GM12878 (cell line): ENCODE measurements at regions of chr5 and their contacts with region 1.

Region 1: DNA sequence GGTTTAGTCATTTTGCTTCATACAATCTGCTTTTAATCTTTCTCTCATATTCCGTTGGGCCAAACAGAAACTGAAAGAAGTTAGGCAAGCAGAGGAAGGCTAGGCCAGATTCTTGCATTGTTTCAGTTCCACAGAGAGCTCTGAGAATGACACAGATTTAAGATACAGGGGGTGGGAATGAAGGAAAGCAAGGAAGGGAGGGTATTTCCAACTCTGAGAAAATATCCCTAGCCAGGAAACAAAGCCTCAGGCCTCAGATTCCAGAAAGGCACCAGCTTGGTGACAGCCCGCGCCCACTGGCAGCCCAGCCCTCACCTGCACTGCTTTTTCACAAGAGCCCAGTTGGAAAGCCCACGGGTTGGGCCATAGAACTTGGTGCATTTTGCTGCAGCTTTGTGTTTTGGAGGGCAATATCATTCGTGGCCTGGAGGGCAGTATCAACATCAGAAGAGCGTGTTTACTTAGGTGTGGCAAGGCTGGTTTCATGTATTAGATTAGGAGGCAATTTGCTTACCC is 63.5 kb downstream of the ENC1 start:
- DNase-seq: peak; percentile 70
- ATAC-seq: peak; percentile 74
- H3K4me3 ChIP-seq: peak overlapping the region; percentile 29
- H3K27ac ChIP-seq: peak overlapping the region; percentile 86
- H3K4me1 ChIP-seq: peaks cover 35% of the 10 kb centered on the region
- H3K27me3 ChIP-seq: no peaks in the 10 kb centered on the region
- CTCF ChIP-seq: no peak
- EP300 ChIP-seq: peak in 1 of 2 experiments; percentile 79; a peak in 2 of 4 replicates
- POLR2A ChIP-seq: no peak
- RAD21 ChIP-seq: peak; percentile 24; the same call in 1 of the 2 replicates

Region 2: GRCh38 chr5:73902327-73903051 is 674.5 kb before region 1 on chr5:
- CTCF ChIA-PET with region 1: no interaction called
- POLR2A ChIA-PET with region 1: no interaction called
- RAD21 ChIA-PET with region 1: interaction called, 4 read pairs
- SMC1A ChIA-PET with region 1: interaction called, 3 read pairs
- in situ Hi-C with region 1: no loop called
- intact Hi-C with region 1: loop called (anchors 5 kb)
- DNase-seq: peak; percentile 55
- ATAC-seq: peak; percentile 3; the same call in 1 of the 3 replicates
- H3K4me3 ChIP-seq: no peak overlapping the region
- H3K27ac ChIP-seq: no peak overlapping the region
- H3K4me1 ChIP-seq: peaks cover 12% of the 10 kb centered on the region
- H3K27me3 ChIP-seq: peaks cover 0 to 7% of the 10 kb centered on the region in 2 experiments; a peak in 1 of 4 replicates
- CTCF ChIP-seq: peak; percentile 33 to 72 (median 68); a peak in 5 of 6 replicates
- EP300 ChIP-seq: no peak
- POLR2A ChIP-seq: no peak
- RAD21 ChIP-seq: peak; percentile 86

Region 3: DNA sequence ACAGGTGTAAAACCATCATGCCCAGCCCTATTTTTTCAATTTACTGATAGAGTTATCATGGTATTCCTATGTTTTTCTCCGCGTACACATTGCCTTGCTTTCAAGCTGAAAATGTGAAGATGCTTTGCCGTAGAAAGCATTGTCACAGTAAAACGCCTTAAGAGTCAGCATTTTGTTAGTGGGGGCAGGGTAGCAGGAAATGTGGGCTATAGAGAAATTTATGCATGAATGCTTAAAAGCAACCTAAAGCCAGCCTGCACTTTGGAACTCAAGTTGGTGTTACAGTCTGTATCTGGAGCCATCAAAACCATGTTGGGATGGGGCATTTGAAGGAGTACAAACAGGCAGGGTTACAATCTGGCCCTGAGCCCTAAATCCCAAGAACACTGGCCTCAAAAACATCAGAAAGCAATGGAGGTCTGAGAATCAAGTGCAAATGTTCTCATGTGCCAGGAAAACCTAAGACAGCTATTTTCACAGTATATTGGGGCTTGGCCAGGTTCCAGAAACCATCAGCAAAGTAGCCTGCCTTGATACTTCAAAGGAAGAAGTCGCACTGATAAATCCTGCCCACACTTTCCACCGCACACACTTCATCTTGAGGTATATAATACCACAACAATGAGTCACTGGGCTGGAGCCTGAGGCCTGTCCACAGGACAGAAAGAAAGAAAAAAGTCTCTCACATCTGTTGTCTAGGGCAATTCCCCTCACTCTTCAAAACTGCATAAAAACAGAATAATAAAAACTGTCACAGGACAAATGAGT is 250.2 kb before region 1 on chr5:
- CTCF ChIA-PET with region 1: no interaction called
- POLR2A ChIA-PET with region 1: no interaction called
- RAD21 ChIA-PET with region 1: no interaction called
- SMC1A ChIA-PET with region 1: no interaction called
- in situ Hi-C with region 1: no loop called
- intact Hi-C with region 1: loop called (anchors 5 kb)
- DNase-seq: peak; percentile 92
- ATAC-seq: peak; percentile 92
- H3K4me3 ChIP-seq: no peak overlapping the region
- H3K27ac ChIP-seq: no peak overlapping the region
- H3K4me1 ChIP-seq: peaks cover 13% of the 10 kb centered on the region
- H3K27me3 ChIP-seq: no peaks in the 10 kb centered on the region
- CTCF ChIP-seq: no peak
- EP300 ChIP-seq: peak; percentile 16 to 25; a peak in 2 of 4 replicates
- POLR2A ChIP-seq: no peak
- RAD21 ChIP-seq: no peak

Region 4: DNA sequence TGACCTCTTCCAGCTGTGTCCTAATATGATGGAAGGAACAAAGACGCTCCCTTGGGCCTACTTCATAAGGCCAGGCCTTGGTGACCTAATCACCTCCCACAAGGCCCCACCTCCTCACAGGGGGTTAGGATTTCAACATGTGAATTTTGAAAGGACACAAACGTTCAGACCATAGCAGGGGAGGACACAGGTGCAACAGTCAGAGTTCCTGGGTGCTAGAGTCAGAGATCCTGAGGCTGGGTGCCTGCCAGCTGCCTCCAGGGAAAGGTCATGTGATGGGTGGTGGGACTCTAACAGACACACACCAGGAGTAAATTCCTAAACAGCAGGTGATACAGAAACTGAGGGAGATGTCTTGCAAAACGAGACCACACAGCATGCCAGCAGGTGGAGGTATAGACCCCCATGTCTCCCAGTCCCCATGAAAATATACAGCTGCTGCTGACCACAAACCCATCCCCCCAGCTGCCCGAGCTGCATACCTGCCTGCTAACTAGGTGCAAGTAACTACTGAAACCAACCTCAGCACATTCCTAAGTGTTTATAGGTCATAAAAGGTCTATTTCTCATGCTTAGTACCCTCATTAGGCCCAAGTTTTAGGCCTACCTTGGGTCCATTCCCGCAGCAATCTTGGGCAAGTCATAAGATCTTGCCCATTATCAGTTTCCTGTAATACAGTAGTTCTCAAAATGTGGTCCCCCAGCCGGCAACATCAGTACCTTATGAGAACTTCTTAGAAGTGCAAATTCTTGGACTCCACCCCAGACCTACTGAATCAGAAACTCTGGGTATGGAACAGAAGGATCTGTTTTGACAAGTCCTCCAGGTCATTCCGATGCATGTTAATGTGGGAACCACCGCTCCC is 181.8 kb before region 1 on chr5:
- CTCF ChIA-PET with region 1: no interaction called
- POLR2A ChIA-PET with region 1: no interaction called
- RAD21 ChIA-PET with region 1: no interaction called
- SMC1A ChIA-PET with region 1: interaction called, 4 read pairs
- in situ Hi-C with region 1: no loop called
- intact Hi-C with region 1: loop called (anchors 5 kb)
- DNase-seq: no peak
- ATAC-seq: peak; percentile 33
- H3K4me3 ChIP-seq: no peak overlapping the region
- H3K27ac ChIP-seq: no peak overlapping the region
- H3K4me1 ChIP-seq: peaks cover 14% of the 10 kb centered on the region
- H3K27me3 ChIP-seq: no peaks in the 10 kb centered on the region
- CTCF ChIP-seq: peak in 2 of 3 experiments; percentile 24 to 34; a peak in 3 of 6 replicates
- EP300 ChIP-seq: no peak
- POLR2A ChIP-seq: no peak
- RAD21 ChIP-seq: peak; percentile 46

Region 5: DNA sequence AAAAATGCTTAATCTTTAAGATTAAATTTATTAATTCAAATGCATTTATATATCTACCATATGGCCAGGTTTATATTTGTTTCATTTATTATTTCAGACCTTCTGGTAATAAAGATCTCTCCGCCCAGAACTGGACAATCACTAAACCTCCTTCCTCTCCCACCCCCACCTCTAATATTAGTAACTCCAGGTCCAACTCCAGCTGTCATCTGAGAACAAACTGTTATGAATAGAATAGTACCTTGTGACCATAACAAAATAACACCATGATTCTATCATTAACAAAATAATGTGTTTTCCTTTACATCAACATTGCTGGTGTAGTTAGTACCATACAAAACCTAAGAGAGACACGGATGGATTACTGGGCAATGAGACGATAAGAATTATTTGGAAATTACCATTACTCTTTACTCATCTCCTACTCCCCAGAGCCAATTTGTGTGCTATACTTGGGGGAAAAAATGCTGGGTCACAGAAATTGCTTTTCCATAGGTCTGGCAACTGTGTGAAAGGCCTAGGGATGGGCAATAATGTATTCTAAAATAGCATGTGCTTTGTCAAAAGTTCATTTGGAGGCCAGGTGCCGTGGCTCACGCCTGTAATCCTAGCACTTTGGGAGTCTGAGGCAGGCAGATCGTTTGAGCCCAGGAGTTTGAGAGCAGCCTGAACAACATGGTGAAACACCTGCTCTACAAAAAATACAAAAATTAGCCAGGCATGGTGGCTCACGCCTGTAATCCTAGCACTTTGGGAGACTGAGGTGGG is 122.6 kb before region 1 on chr5:
- CTCF ChIA-PET with region 1: no interaction called
- POLR2A ChIA-PET with region 1: no interaction called
- RAD21 ChIA-PET with region 1: no interaction called
- SMC1A ChIA-PET with region 1: no interaction called
- in situ Hi-C with region 1: no loop called
- intact Hi-C with region 1: no loop called
- DNase-seq: no peak
- ATAC-seq: no peak
- H3K4me3 ChIP-seq: no peak overlapping the region
- H3K27ac ChIP-seq: no peak overlapping the region
- H3K4me1 ChIP-seq: no peaks in the 10 kb centered on the region
- H3K27me3 ChIP-seq: no peaks in the 10 kb centered on the region
- CTCF ChIP-seq: no peak
- EP300 ChIP-seq: no peak
- POLR2A ChIP-seq: no peak
- RAD21 ChIP-seq: no peak

Region 6: DNA sequence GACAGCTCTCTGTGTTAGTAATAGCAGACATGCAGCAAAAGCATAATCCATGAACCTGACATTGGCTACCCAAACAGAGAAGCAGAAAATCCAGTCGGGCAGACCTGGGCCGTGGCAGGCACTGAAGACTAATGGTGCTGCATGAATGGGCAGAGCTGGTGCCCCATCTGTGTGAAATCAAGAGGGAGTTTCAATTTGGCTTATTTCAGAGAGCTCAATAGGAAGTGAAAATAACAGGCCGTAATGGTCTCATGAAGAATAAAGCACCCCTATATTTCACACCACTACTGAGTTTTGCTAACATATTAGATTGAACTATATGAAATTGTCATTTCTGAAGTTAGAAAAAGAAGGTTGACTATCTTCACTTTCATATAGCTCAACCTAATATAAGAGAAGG is 86.2 kb before region 1 on chr5:
- CTCF ChIA-PET with region 1: no interaction called
- POLR2A ChIA-PET with region 1: interaction called, 3 read pairs
- RAD21 ChIA-PET with region 1: interaction called, 9 read pairs
- SMC1A ChIA-PET with region 1: interaction called, 17 read pairs
- in situ Hi-C with region 1: no loop called
- intact Hi-C with region 1: loop called (anchors 2 kb)
- DNase-seq: peak; percentile 88
- ATAC-seq: peak; percentile 98
- H3K4me3 ChIP-seq: no peak overlapping the region
- H3K27ac ChIP-seq: peak overlapping the region; percentile 85
- H3K4me1 ChIP-seq: peaks cover 26% of the 10 kb centered on the region
- H3K27me3 ChIP-seq: no peaks in the 10 kb centered on the region
- CTCF ChIP-seq: no peak
- EP300 ChIP-seq: peak in 1 of 2 experiments; percentile 73; a peak in 2 of 4 replicates
- POLR2A ChIP-seq: no peak
- RAD21 ChIP-seq: peak; percentile 38; the same call in 1 of the 2 replicates

Region 7: GRCh38 chr5:74625742-74626241 is 48.8 kb after region 1 on chr5:
- CTCF ChIA-PET with region 1: no interaction called
- POLR2A ChIA-PET with region 1: interaction called, 3 read pairs
- RAD21 ChIA-PET with region 1: interaction called, 5 read pairs
- SMC1A ChIA-PET with region 1: interaction called, 6 read pairs
- in situ Hi-C with region 1: no loop called
- intact Hi-C with region 1: loop called (anchors 2 kb)
- DNase-seq: no peak
- ATAC-seq: no peak
- H3K4me3 ChIP-seq: no peak overlapping the region
- H3K27ac ChIP-seq: no peak overlapping the region
- H3K4me1 ChIP-seq: peaks cover 6% of the 10 kb centered on the region
- H3K27me3 ChIP-seq: no peaks in the 10 kb centered on the region
- CTCF ChIP-seq: peak in 1 of 3 experiments; percentile 5; a peak in 1 of 6 replicates
- EP300 ChIP-seq: no peak
- POLR2A ChIP-seq: no peak
- RAD21 ChIP-seq: no peak

Region 8: GRCh38 chr5:74631081-74631953 is 54.3 kb after region 1 on chr5:
- CTCF ChIA-PET with region 1: interaction called, 4 read pairs
- POLR2A ChIA-PET with region 1: interaction called, 3 read pairs
- RAD21 ChIA-PET with region 1: interaction called, 9 read pairs
- SMC1A ChIA-PET with region 1: interaction called, 11 read pairs
- in situ Hi-C with region 1: no loop called
- intact Hi-C with region 1: loop called (anchors 2 kb)
- DNase-seq: peak; percentile 97
- ATAC-seq: peak; percentile 88
- H3K4me3 ChIP-seq: peak overlapping the region; percentile 50; the same call in 1 of the 2 replicates
- H3K27ac ChIP-seq: peak overlapping the region; percentile 83
- H3K4me1 ChIP-seq: peaks cover 30% of the 10 kb centered on the region
- H3K27me3 ChIP-seq: no peaks in the 10 kb centered on the region
- CTCF ChIP-seq: no peak
- EP300 ChIP-seq: peak; percentile 84 to 85; a peak in 3 of 4 replicates
- POLR2A ChIP-seq: no peak
- RAD21 ChIP-seq: no peak